ENCODE measurements at regions of chr3 and their contacts with region 1.

Region 1: GRCh38 chr3:127970966-127971592 is 56.0 kb downstream of the KBTBD12 start:
- DNase-seq: no peak

Region 2: DNA sequence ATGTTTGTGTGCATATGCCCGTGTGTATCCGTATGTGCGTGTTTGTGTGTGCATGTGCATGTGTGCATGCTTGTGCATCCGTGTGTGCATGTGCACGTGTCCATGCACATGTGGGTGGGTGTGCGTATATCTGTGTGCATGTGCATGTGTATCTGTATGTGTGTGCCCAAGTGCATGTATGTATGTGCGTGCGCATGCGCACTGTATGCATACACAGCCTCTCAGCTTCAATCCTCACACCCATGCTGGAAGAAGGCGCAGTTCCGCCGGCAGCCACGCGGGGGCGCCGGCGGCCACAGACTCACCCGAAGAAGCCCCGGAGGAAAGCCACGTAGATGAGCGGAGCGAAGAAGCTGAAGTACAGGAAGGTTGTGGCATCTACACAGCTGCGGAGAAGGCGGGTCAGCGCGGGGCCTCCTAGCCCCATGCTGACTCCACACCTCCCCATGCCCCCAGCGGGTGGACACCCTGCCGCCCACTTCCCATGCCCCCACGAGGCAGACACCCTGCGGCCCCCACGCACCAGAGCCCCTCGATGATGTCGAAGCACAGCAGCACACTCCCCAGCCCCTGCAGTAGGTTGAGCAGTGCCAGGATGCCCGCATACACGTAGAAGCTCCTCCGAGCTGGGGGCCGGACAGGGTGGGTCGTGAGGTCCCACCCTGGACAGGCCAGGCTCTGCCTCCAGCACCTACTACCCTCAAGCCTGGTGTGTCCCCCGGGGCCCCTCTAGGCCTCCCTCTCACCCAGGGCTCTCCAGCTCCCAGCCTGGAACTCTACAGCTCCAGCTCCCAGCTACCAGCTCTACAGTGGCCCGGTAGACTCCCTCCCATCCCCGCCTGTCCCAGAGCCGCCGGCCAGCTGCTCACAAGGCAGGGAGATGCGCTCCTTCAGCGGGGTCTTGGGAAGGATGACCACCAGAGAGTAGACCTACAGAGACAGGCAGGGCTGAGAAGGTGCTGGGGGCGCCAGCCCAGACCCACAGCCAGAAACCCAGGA is 395.9 kb before region 1 on chr3:
- intact Hi-C with region 1: loop called (anchors 10 kb)
- DNase-seq: peak; percentile 93

Region 3: DNA sequence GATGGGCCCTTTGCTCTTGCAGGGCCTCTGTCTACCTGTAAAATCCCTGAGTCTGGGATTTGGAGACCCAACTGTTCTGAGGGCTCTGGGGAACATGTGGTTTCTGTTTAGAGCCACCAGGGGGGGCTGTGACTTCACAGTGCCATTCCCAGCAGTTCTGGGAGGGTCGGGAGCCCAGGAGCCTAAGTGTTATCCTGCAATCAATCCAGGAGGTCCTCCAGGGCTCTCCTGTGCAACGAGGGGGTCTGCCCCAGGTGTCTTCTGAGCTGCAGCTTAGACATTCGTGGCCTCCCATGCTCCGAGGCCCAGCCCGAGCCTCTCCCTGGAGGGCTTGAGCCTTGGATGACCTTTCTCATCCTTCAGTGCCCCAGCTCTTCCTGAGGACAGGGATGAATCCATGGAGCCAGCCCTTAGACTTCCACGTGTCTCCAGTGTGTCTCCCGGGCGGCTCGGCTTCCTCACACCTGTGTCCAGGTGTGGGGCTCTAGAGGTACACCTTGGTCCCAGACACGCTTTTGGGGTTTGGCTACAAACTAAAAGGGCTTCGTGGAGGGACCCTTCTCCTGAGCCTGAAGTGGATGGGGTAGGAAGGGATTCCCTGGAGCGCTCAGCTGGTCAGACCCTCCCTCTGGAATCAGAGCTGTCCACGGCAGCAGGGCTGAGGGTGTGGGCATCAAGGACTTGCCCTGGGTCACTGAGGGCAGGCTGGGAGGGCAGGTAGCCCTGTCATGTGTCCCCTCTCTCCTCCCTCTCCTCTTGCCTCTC is 318.7 kb before region 1 on chr3:
- intact Hi-C with region 1: loop called (anchors 5 kb)
- DNase-seq: peak; percentile 76

Region 4: DNA sequence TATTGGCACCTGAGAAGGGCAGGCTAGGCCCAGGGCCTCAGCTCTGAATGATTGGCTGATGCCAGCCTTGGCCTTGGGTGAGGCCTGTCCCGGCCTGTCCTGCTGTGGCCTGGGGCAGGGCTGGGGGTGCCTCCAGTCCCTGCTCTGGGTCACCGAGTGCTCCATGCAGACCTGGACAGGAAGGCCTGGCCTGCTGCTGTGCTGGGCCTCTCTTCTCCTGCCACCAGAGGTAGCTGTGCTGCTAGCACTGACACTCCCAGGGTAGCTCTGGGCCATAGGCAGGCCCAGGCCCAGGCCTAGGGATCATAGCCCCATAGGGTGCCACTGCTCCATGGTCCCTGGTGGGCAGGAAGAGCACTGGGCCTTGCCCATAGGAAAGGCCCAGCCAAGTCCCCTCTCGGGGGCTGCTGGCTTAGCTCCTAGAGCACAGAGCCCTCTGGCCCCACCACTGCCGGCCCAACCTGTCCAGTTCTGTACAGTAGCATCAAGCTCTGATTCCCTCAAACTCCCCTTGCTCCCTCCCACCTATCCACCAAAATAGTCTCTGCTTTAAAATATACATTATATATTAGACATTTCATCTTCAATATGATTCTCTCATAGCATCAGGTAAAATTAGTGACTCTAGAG is 280.1 kb before region 1 on chr3:
- intact Hi-C with region 1: loop called (anchors 5 kb)
- DNase-seq: peak; percentile 77

Region 5: GRCh38 chr3:127762077-127762786 is 208.8 kb before region 1 on chr3:
- intact Hi-C with region 1: loop called (anchors 5 kb)
- DNase-seq: no peak